ENCODE measurements at regions of chr10 and their contacts with region 1.

Region 1: DNA sequence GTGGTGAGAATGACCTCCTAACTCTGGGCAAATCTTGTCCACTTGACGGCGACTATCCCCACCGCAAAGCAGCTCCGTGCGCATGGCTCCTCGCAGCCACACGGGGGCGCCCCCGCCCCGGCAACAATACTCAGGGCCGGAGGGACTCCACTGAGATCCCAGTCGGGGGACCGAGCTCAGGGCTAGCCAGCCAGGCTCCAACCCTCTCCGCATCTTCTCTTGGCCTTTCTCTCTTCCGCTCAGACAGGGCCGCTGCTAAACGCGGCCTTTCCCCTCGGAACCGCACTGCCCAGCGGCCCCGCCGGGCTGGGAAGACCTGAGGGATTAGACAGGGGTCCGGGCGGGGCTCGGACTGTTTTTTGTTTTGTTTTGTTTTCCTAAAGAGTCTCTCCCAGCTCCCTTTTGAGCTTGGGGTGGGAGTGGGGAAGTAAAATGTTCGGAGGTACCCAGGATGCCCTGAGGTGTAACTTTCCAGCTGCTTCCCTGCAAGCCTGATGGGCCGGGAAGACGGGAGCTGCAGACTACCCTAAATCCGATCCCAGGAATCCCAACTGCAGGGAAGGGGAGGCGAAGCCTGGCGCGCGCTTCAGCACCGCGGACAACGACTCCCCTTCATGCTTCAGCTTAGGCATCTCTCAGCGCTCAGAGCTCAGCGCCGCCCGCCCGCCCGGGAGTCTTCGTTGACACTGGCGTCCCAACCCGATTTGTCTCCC is 2.7 kb downstream of the KCNIP2 start:
- DNase-seq: peak; percentile 56
- H3K4me3 ChIP-seq: peak overlapping the region; percentile 54
- H3K27ac ChIP-seq: no peak overlapping the region
- H3K27me3 ChIP-seq: peaks cover 3% of the 10 kb centered on the region
- CTCF ChIP-seq: peak; percentile 96

Region 2: DNA sequence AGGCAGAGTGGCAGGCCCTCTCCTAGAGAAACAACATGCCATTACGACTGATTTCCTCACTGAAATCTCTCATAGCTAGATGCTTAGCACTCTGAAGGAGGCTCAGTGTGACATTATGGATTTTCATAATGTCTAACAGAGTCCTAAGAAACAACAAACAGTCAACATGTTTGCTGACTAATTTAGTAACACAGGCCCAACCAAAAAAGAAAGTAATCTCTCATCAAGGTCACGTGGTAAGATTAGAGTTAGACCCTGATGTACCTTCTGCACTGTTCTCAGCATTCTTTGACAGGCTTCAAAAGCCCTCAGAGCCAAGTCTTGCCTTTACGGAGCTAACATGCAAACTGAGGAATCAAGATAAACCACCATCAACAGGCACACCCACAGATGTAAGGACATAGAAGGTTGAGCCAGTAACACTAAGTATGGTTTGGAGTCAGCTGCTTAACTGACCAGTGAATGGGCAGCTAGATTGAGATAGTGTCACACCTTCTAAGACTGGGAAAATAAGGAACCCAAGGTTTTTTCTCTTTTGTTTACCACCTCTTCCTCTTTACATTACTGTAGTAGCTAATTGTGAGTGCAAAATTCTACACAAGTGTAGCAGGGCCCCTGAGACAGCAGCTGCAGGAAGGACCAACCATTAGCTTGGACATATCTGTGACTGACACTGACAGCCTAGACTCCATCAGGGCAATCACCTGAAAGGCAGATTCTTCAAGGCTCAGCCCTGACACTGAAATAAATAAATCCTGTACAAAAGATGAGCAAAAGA is 18.0 kb after region 1 on chr10:
- CTCF ChIA-PET with region 1: interaction called, 21 read pairs
- POLR2A ChIA-PET with region 1: interaction called, 5 read pairs
- DNase-seq: no peak
- H3K4me3 ChIP-seq: no peak overlapping the region
- H3K27ac ChIP-seq: no peak overlapping the region
- H3K27me3 ChIP-seq: no peaks in the 10 kb centered on the region
- CTCF ChIP-seq: no peak

Region 3: DNA sequence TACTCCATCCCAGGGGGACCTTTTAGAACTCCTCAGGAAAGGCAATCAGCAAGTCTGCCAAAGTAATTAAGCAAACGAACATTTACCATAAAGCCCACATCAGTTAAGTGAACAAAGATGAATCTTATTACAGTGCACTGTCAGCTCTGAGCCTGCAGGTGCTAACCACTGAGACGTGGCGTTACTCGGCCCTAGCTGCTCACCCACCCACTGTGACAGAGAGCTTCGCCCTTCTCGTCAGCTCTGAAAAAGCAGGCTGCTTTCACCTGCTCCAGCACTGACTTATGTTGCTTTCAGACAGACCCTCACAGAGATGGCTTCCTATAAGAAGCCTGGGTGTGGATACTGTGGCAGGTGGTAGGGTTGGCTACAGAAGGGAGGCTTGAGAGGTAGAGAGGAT is 60.4 kb after region 1 on chr10:
- CTCF ChIA-PET with region 1: interaction called, 17 read pairs
- POLR2A ChIA-PET with region 1: interaction called, 3 read pairs
- DNase-seq: no peak
- H3K4me3 ChIP-seq: no peak overlapping the region
- H3K27ac ChIP-seq: no peak overlapping the region
- H3K27me3 ChIP-seq: no peaks in the 10 kb centered on the region
- CTCF ChIP-seq: no peak

Region 4: DNA sequence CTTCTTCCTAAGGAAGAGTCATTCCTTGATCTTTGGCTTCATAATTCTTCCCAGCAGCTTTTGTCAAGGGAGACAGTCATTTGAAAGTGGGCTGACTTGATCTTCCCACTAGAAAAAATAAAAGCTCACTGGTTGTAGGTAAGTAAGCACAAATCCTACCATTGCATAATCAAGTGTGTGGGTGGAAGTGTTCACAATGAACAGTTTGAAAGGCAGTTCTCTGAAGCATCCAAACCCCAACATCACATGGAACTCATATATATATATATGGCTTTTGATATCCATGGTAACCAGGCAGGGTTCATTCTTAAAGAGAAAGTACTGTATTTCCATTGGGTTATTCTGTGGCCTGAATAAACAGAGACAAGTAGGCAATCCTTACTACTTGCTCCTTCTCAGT is 163.5 kb after region 1 on chr10:
- CTCF ChIA-PET with region 1: interaction called, 256 read pairs
- POLR2A ChIA-PET with region 1: interaction called, 3 read pairs
- DNase-seq: peak; percentile 24
- H3K4me3 ChIP-seq: no peak overlapping the region
- H3K27ac ChIP-seq: no peak overlapping the region
- H3K27me3 ChIP-seq: no peaks in the 10 kb centered on the region
- CTCF ChIP-seq: no peak

Region 5: GRCh38 chr10:102024799-102025198 is 183.9 kb after region 1 on chr10:
- CTCF ChIA-PET with region 1: interaction called, 11 read pairs
- POLR2A ChIA-PET with region 1: no interaction called
- DNase-seq: no peak
- H3K4me3 ChIP-seq: no peak overlapping the region
- H3K27ac ChIP-seq: no peak overlapping the region
- H3K27me3 ChIP-seq: no peaks in the 10 kb centered on the region
- CTCF ChIP-seq: no peak

Region 6: DNA sequence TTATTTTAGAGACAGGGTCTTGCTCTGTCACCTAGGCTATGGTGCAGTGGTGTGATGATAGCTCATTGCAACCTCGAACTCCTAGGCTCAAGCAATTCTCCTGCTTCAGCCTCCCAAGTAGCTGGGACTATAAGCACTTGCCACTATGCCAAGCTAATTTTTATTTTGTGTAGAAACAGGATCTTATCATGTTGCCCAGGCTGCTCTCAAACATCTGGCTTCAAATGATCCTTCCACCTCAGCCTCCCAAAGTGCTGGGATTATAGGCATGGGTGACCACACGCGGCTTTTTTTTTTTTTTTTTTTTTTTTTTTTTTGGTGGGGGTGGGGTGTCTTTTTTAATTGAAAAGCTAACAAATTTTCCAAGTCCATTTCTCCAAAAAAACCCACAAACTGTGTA is 242.6 kb after region 1 on chr10:
- CTCF ChIA-PET with region 1: interaction called, 12 read pairs
- POLR2A ChIA-PET with region 1: no interaction called
- DNase-seq: no peak
- H3K4me3 ChIP-seq: no peak overlapping the region
- H3K27ac ChIP-seq: no peak overlapping the region
- H3K27me3 ChIP-seq: no peaks in the 10 kb centered on the region
- CTCF ChIP-seq: no peak